Psoas muscle (tissue), 8 donors: ENCODE measurements at regions of chr11 and their contacts with region 1.

Region 1: DNA sequence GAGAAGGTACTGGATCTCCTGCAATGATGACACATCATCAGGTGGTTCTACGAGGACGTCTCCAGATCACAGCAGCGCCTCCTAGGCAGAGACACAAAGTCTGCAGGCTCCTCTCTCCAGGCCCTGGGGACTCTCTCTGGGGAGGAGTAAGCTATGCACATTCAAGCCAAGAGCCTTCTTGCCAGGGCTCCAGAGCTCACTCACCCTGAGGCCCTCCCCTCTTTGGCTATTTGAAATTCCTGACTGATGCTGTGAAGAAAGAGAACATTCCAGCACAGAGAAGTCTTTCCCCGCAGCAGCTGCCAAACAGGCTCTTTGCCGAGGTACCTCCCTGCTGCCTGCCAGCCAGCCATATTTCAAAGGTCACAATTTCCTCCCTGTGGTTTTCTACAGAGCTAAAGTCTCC is 204.9 kb downstream of the CSNK2A3 start:
- DNase-seq: peak; percentile 83 to 93
- ATAC-seq: peak; percentile 91 to 95 (median 92)
- H3K4me3 ChIP-seq: no peak overlapping the region
- H3K27ac ChIP-seq: peak overlapping the region; percentile 46
- H3K4me1 ChIP-seq: peaks cover 18% of the 10 kb centered on the region
- H3K27me3 ChIP-seq: no peaks in the 10 kb centered on the region
- CTCF ChIP-seq: peak; percentile 46

Region 2: DNA sequence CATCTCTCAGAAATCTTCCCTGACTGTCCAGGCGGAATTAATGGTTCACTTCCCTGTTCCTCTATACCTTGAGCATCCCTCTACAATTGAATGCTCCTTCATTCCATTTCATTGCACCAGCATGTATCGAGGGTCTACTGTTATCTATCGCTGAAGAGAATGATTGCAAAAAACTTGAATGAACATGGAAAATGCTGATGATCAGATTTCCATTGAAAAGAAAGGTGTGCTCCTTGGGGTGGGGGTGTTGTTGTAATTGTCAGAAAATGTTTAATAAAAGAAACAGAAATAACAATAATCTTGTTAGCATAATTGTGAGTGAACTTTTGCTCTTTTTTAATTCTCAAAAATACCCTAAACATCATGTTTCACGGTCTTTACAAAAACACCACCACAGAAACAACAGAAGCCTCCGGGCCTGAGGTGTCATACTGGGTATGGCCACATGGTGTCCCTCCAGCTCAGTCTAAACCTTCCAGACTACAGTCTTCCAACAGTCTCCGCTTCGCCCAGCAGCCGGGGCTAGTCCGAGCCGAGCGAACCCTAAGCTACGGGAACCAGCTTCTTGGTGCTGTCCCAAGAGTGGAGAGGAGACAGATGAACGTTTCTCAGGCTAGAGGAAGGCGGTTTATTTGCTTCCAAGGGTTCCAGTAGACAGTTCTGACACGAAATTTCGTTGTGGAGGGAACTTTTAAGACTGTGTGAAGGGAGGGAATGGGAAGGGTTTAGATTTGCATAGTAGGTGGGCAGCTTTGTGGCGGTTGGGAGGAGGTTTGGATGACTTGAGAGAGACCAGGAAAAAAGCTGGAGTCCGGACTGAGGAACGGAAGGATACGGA is 214.4 kb before region 1 on chr11:
- intact Hi-C with region 1: no loop called
- DNase-seq: peak; percentile 89 to 94
- ATAC-seq: peak; percentile 87 to 91 (median 90)
- H3K4me3 ChIP-seq: peak overlapping the region; percentile 63
- H3K27ac ChIP-seq: peak overlapping the region; percentile 65
- H3K4me1 ChIP-seq: no peaks in the 10 kb centered on the region
- H3K27me3 ChIP-seq: no peaks in the 10 kb centered on the region
- CTCF ChIP-seq: peak; percentile 99

Region 3: DNA sequence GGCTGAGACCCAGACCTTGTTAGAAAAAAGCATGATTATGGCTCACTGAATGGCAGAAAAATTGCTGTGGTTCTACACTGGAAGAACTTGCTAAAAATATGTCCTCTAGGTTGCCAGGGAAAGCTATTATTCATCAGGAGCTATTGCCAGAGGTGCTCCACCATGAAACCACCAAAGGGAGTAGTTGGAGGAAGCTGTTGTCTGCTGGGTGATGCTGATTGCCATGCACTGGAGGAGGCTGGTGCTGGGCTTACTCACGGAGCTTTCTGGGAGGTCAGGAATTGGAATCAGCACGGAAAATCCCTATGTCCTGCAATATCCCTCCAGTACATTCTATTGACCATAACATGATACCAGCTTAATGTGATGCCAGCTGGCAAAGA is 90.6 kb before region 1 on chr11:
- intact Hi-C with region 1: loop called in 1 of 2 experiments (anchors 5 kb)
- DNase-seq: no peak
- ATAC-seq: peak; percentile 60 to 85 (median 77)
- H3K4me3 ChIP-seq: no peak overlapping the region
- H3K27ac ChIP-seq: no peak overlapping the region
- H3K4me1 ChIP-seq: peaks cover 8% of the 10 kb centered on the region
- H3K27me3 ChIP-seq: no peaks in the 10 kb centered on the region
- CTCF ChIP-seq: no peak

Region 4: DNA sequence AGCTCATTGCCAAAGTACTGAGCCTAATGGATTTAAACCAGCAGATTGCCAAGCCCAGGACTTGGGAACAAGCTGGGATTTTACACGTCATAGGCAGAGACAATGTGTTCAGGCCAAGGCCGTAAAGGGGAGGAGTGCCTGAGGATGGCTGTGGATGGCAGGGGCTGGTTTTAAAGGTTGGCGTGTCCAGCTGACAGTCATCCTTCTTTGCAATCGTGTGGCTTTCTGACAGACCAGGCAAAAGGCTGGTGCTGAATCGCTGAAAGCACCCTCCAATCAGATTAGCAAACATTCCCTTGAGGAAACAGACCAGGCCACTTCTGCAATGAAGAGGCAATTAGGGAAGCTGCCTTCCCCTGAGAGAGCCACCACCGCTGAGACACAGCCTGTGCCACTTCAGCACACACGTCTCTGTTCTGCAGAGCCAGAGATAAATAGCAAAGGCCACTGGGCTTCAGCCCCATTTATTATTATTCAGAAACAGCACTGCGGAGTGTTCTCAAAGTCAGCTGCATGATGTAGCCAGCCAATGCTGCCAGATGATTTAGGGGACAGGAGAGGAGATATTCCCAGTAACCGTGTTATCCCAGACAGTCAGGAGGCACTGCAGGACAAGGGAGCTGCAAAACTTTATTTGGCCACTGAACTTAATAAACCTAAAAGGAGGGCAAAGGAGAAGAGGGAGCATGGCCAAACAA is 259.1 kb after region 1 on chr11:
- intact Hi-C with region 1: no loop called
- DNase-seq: peak; percentile 30 to 58
- ATAC-seq: peak in 3 of 4 donors; percentile 61 to 82 (median 70)
- H3K4me3 ChIP-seq: no peak overlapping the region
- H3K27ac ChIP-seq: no peak overlapping the region
- H3K4me1 ChIP-seq: peaks cover 12% of the 10 kb centered on the region
- H3K27me3 ChIP-seq: no peaks in the 10 kb centered on the region
- CTCF ChIP-seq: no peak